ENCODE measurements at regions of chr17 and their contacts with region 1.

Region 1: GRCh38 chr17:14926526-14927122 is 338.5 kb downstream of the PMP22 start:
- DNase-seq: peak; percentile 26
- H3K4me3 ChIP-seq: no peak overlapping the region
- H3K27ac ChIP-seq: no peak overlapping the region
- H3K4me1 ChIP-seq: no peaks in the 10 kb centered on the region
- H3K27me3 ChIP-seq: peaks cover 31% of the 10 kb centered on the region; the same call in 1 of the 2 replicates
- CTCF ChIP-seq: peak; percentile 85
- EP300 ChIP-seq: no peak
- RAD21 ChIP-seq: peak; percentile 84

Region 2: GRCh38 chr17:14859542-14859941 is 67.1 kb before region 1 on chr17:
- CTCF ChIA-PET with region 1: no interaction called
- POLR2A ChIA-PET with region 1: no interaction called
- DNase-seq: no peak
- H3K4me3 ChIP-seq: no peak overlapping the region
- H3K27ac ChIP-seq: no peak overlapping the region
- H3K4me1 ChIP-seq: no peaks in the 10 kb centered on the region
- H3K27me3 ChIP-seq: peaks cover 6% of the 10 kb centered on the region; the same call in 1 of the 2 replicates
- CTCF ChIP-seq: no peak
- EP300 ChIP-seq: no peak
- RAD21 ChIP-seq: no peak

Region 3: GRCh38 chr17:14903854-14904253 is 22.8 kb before region 1 on chr17:
- CTCF ChIA-PET with region 1: interaction called, 15 read pairs
- POLR2A ChIA-PET with region 1: no interaction called
- DNase-seq: no peak
- H3K4me3 ChIP-seq: no peak overlapping the region
- H3K27ac ChIP-seq: no peak overlapping the region
- H3K4me1 ChIP-seq: no peaks in the 10 kb centered on the region
- H3K27me3 ChIP-seq: no peaks in the 10 kb centered on the region
- CTCF ChIP-seq: no peak
- EP300 ChIP-seq: no peak
- RAD21 ChIP-seq: no peak

Region 4: GRCh38 chr17:14940108-14940945 is 13.7 kb after region 1 on chr17:
- CTCF ChIA-PET with region 1: interaction called, 27 read pairs
- POLR2A ChIA-PET with region 1: no interaction called
- DNase-seq: no peak
- H3K4me3 ChIP-seq: no peak overlapping the region
- H3K27ac ChIP-seq: no peak overlapping the region
- H3K4me1 ChIP-seq: no peaks in the 10 kb centered on the region
- H3K27me3 ChIP-seq: no peaks in the 10 kb centered on the region; the same call in 1 of the 2 replicates
- CTCF ChIP-seq: no peak
- EP300 ChIP-seq: no peak
- RAD21 ChIP-seq: no peak

Measured in SK-N-SH (cell line).